Calu3 (cell line): ENCODE measurements at regions of chr7 and their contacts with region 1.

Region 1: DNA sequence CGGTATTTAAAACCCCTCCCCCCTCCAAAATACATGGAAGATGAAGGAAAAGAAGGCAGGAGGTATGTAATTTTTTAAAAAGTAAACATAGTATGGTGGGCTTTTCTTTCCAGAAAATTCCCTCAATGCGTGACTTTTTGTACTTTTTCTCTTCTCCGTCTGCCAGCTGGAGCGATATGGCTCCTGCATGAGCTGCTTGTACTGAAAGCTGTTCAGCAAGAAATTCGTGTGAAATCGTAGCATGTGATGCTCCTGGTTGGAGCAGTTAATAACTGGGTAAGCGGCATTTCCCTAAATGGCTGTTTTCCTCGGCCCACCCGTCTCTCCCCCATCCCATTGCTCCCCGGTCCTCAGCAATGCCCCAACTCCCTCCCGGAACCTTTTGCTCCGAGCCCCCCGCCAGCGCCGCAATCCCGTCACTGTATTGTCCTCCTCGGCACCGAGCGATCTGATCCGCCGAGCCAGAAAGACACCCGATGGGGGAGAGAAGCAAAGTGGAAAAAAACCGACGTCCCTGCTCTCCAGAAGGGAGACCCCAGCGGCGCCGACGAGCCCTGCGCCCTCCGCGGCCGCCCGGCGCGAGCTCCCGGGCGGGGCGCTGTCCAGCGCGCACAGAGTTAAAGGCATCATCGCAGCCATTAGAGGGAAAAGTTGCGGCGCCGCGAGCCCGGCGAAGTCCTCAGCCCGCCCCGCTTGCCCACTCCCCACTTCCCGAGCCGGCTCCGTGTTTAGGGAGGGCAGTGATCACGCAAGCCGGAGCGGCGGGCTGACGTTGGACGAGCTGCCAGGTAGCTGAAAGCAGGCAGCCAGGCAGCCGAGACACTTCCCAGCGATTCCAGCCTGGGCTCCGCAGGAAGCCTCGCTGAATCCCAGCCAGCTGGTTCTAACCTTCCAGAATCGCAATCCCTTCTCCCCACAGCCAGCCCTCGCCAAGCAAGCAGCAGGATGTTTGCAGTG is at the start of gene VSTM2A:
- DNase-seq: no peak
- H3K4me3 Mint-ChIP-seq: no peak within 1 kb of the TSS
- H3K27ac Mint-ChIP-seq: no peak within 1 kb of the TSS
- H3K4me1 Mint-ChIP-seq: no peaks in the 10 kb centered on the region
- H3K27me3 Mint-ChIP-seq: peaks cover 87% of the 10 kb centered on the region
- CTCF ChIP-seq: no peak
- total RNA-seq, gene VSTM2A: not detected in 2 replicates

Region 2: GRCh38 chr7:54758702-54759592 is 217.0 kb after region 1 on chr7 and contains the start of gene SEC61G:
- CTCF ChIA-PET with region 1: no interaction called
- intact Hi-C with region 1: loop called (anchors 5 kb)
- DNase-seq: peak; percentile 99
- H3K4me3 Mint-ChIP-seq: peak within 1 kb of the TSS; percentile 99
- H3K27ac Mint-ChIP-seq: peak within 1 kb of the TSS; percentile 99
- H3K4me1 Mint-ChIP-seq: peaks cover 23% of the 10 kb centered on the region
- H3K27me3 Mint-ChIP-seq: peaks cover 8% of the 10 kb centered on the region
- CTCF ChIP-seq: no peak
- total RNA-seq, gene SEC61G: 198 and 202 TPM in 2 replicates